B cell (primary cell): ENCODE measurements at regions of chr5 and their contacts with region 1.

Region 1: GRCh38 chr5:179166886-179167841 is 107.0 kb downstream of the ZNF354C start:
- DNase-seq: peak; percentile 75
- ATAC-seq: peak; percentile 74
- H3K4me3 ChIP-seq: peak overlapping the region in 3 of 5 experiments; percentile 30 to 49 (median 43)
- H3K4me3 Mint-ChIP-seq: peak overlapping the region; percentile 66
- H3K27ac ChIP-seq: no peak overlapping the region
- H3K27ac Mint-ChIP-seq: no peak overlapping the region
- H3K4me1 ChIP-seq: peaks cover 4 to 12% of the 10 kb centered on the region in 2 donors
- H3K4me1 Mint-ChIP-seq: peaks cover 3% of the 10 kb centered on the region
- H3K27me3 ChIP-seq: peaks cover 0 to 21% (median 1%) of the 10 kb centered on the region in 4 experiments
- H3K27me3 Mint-ChIP-seq: peaks cover 5% of the 10 kb centered on the region
- CTCF ChIP-seq: peak; percentile 94

Region 2: DNA sequence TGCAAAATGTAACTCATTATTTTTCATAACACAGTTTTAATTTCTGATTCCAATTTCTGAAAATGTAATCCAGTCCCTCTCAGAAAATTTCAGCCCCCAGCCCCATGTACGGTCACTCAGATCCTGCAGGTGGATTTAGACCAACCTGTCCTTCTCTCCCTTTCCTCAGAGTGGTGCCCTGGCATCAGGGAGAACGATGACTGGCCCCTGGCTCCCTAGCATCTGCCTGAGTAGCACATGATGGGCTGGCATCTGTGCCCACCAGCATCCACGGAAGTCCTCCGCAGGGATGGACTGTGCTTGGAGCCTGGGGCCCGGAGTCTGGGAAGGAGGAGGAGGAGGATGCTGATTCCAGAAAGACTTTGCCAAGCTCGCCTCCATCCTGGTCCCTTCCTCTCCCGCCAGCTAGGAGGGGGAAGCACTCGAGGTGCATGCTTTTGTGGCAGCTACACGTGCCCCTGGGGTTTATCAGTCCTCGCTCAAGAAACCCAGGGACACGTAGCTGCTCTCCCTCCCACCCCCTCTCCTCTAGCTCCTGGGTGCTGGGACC is 328.8 kb after region 1 on chr5:
- CTCF ChIA-PET with region 1: interaction called, 28 read pairs
- POLR2A ChIA-PET with region 1: no interaction called
- intact Hi-C with region 1: no loop called
- DNase-seq: no peak
- ATAC-seq: no peak
- H3K4me3 ChIP-seq: no peak overlapping the region
- H3K4me3 Mint-ChIP-seq: no peak overlapping the region
- H3K27ac ChIP-seq: no peak overlapping the region
- H3K27ac Mint-ChIP-seq: no peak overlapping the region
- H3K4me1 ChIP-seq: no peaks in the 10 kb centered on the region
- H3K4me1 Mint-ChIP-seq: peaks cover 7% of the 10 kb centered on the region
- H3K27me3 ChIP-seq: peaks cover 0 to 5% (median 0%) of the 10 kb centered on the region in 4 experiments
- H3K27me3 Mint-ChIP-seq: peaks cover 6% of the 10 kb centered on the region
- CTCF ChIP-seq: no peak

Region 3: GRCh38 chr5:179668391-179668790 is 501.2 kb after region 1 on chr5:
- CTCF ChIA-PET with region 1: interaction called, 6 read pairs
- POLR2A ChIA-PET with region 1: no interaction called
- intact Hi-C with region 1: loop called (anchors 5 kb)
- DNase-seq: peak; percentile 32
- ATAC-seq: no peak
- H3K4me3 ChIP-seq: no peak overlapping the region
- H3K4me3 Mint-ChIP-seq: no peak overlapping the region
- H3K27ac ChIP-seq: no peak overlapping the region
- H3K27ac Mint-ChIP-seq: no peak overlapping the region
- H3K4me1 ChIP-seq: no peaks in the 10 kb centered on the region
- H3K4me1 Mint-ChIP-seq: no peaks in the 10 kb centered on the region
- H3K27me3 ChIP-seq: no peaks in the 10 kb centered on the region
- H3K27me3 Mint-ChIP-seq: no peaks in the 10 kb centered on the region
- CTCF ChIP-seq: peak; percentile 58

Region 4: DNA sequence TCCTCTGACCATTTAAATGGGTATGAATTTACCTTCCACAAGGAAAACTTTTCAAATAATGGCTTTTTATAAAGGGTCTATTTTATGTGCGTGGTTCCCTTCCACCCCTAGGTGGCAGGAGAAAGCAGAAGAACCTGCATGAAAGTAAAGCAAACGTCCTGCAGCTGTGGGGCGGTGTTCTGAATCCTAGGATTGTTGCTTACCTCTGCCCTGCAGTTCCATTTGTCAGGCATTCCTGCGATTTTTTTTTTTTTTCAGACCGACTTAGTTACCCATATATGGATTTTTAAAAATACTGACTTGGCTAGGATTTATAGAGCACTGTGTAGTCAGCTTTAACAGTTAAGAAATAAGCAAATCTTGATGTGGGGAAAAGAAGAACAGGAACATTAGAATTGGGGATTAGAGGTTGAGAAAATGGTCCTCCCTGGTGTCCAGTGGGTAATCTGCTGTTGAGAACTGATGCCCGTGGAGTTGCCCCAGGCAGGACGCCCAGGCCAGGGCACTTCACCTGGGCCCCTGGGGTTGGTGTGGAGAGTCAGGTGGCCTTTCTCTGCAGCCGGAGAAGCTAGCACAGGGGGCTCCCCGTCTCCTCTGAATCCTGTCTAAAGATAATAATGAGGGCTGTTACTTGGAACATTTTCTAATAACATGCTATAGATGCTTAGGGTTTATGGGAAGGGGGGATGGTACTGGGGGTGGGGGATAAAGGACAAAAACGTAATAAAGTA is 596.2 kb after region 1 on chr5:
- CTCF ChIA-PET with region 1: no interaction called
- POLR2A ChIA-PET with region 1: no interaction called
- intact Hi-C with region 1: loop called (anchors 5 kb)
- DNase-seq: peak; percentile 71
- ATAC-seq: peak; percentile 62
- H3K4me3 ChIP-seq: no peak overlapping the region
- H3K4me3 Mint-ChIP-seq: no peak overlapping the region
- H3K27ac ChIP-seq: no peak overlapping the region
- H3K27ac Mint-ChIP-seq: no peak overlapping the region
- H3K4me1 ChIP-seq: peaks cover 17 to 32% of the 10 kb centered on the region in 2 donors
- H3K4me1 Mint-ChIP-seq: peaks cover 45% of the 10 kb centered on the region
- H3K27me3 ChIP-seq: no peaks in the 10 kb centered on the region
- H3K27me3 Mint-ChIP-seq: no peaks in the 10 kb centered on the region
- CTCF ChIP-seq: peak; percentile 96